Activated naive CD4-positive, alpha-beta T cell treated with anti-CD3 and anti-CD28 coated beads for 36 hours (primary cell): ENCODE measurements at regions of chr16 and their contacts with region 1.

Region 1: GRCh38 chr16:57045694-57046381 is 46.5 kb upstream of the CPNE2 start:
- DNase-seq: peak; percentile 51
- H3K4me3 Mint-ChIP-seq: no peak overlapping the region
- H3K27ac Mint-ChIP-seq: peak overlapping the region; percentile 73
- H3K4me1 Mint-ChIP-seq: peaks cover 65% of the 10 kb centered on the region
- H3K27me3 Mint-ChIP-seq: no peaks in the 10 kb centered on the region

Region 2: DNA sequence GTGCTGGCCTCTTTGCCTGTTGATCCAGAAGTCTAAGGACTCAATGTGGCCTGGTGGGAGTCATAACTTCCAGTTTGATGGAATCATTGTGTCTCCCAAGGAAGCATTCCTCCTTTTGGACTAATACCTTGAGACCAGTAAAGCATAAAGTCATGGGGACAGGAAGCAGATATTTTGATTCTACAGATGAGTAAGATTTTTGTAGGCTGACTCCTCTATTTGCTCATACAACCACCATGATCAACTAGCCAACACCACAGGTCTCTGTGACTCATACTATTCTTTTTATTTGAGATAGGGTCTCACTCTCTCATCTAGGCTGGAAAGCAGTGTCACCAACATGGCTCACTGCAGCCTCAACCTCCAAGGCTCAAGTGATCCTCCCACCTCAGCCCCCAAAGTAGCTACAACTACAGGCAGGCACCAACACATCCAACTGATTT is 431.3 kb before region 1 on chr16:
- CTCF ChIA-PET with region 1: no interaction called
- intact Hi-C with region 1: loop called (anchors 1 kb)
- DNase-seq: peak; percentile 58
- H3K4me3 Mint-ChIP-seq: no peak overlapping the region
- H3K27ac Mint-ChIP-seq: no peak overlapping the region
- H3K4me1 Mint-ChIP-seq: peaks cover 59% of the 10 kb centered on the region
- H3K27me3 Mint-ChIP-seq: peaks cover 20% of the 10 kb centered on the region

Region 3: DNA sequence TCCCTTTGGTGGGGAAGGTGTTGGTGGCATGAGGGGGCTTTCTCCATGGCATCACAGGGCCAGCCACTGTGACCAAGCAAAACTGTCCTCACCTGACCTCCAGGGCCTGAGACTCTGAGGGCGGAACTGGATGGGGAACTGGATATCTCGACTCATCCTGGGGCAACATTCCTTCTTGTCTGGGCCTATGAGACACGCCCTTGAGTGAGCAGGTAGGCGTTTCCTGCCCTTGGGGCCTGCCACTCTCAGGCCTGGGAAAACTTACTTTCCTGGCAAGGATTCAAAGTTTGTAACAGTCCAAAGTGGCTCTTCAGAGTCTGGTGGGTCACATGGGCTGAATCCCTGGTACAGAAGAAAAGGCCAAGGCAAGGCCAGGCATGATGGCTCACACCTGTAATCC is 354.0 kb before region 1 on chr16:
- CTCF ChIA-PET with region 1: no interaction called
- intact Hi-C with region 1: no loop called
- DNase-seq: no peak
- H3K4me3 Mint-ChIP-seq: no peak overlapping the region
- H3K27ac Mint-ChIP-seq: no peak overlapping the region
- H3K4me1 Mint-ChIP-seq: no peaks in the 10 kb centered on the region
- H3K27me3 Mint-ChIP-seq: no peaks in the 10 kb centered on the region

Region 4: DNA sequence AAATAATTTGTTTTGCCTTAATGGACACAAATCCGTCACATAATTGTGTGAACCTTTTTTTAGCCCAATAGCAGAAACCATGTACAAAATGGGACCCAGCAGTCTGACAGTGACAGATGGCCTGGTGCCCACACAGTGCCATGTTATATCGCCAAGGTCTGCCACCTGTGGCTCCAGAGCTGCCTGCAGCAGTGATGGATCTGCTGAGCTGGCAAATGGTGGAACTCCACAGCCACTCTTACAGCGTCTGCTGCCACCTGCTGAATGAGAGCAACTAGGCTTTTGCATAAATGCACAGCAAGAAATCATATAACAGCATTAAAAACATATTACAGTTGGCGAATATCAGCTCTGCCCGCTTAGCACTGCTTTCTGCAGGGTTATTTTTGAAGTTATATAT is 256.5 kb before region 1 on chr16:
- CTCF ChIA-PET with region 1: no interaction called
- intact Hi-C with region 1: no loop called
- DNase-seq: peak; percentile 60
- H3K4me3 Mint-ChIP-seq: no peak overlapping the region
- H3K27ac Mint-ChIP-seq: no peak overlapping the region
- H3K4me1 Mint-ChIP-seq: no peaks in the 10 kb centered on the region
- H3K27me3 Mint-ChIP-seq: no peaks in the 10 kb centered on the region

Region 5: GRCh38 chr16:56866943-56867830 is 178.7 kb before region 1 on chr16:
- CTCF ChIA-PET with region 1: interaction called, 3 read pairs
- intact Hi-C with region 1: loop called (anchors 10 kb)
- DNase-seq: peak; percentile 64
- H3K4me3 Mint-ChIP-seq: no peak overlapping the region
- H3K27ac Mint-ChIP-seq: no peak overlapping the region
- H3K4me1 Mint-ChIP-seq: peaks cover 15% of the 10 kb centered on the region
- H3K27me3 Mint-ChIP-seq: no peaks in the 10 kb centered on the region

Region 6: DNA sequence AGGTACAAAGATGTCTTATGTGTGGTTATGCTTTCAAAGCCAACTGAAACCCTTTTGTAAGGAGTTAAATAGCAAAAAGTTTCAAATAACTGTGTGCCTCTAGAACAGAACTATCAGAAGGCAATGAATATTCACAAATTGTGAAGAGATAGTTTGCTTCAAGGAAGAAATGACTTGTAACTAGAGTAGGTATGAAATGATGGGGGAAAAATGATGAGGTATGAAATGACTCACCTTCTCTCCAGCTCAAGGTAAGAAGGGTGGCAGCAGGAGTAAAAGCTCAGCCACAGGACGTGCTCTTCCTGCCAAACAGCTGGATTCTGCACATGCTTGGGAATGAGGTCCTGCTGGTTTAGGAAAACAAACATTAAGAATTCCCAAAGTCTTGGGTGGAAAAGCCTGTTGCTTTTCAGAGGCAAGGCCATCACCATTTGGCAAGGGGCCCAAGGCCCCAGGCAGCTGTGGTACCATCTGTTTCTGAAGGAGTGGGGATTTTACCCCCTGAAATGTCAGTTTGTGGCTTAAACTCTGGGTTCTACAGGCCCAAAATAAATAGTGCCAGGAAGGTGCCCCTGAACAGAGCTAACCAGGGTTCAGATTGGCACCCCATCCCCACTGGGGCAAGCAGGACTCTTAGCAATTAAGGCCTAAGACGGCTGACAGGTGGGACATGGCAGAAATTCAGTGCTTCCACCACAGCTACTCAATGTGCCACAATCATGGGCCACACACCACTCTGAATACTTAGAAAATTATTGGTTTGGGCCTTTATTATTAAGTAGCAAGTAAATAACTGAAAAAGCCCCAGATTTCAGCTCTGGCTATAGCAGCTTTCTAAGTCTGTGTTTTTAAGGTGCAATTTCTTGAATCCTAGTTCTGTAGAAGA is 100.6 kb before region 1 on chr16:
- CTCF ChIA-PET with region 1: interaction called, 3 read pairs
- intact Hi-C with region 1: loop called (anchors 1 kb)
- DNase-seq: peak; percentile 65
- H3K4me3 Mint-ChIP-seq: peak overlapping the region; percentile 3
- H3K27ac Mint-ChIP-seq: peak overlapping the region; percentile 96
- H3K4me1 Mint-ChIP-seq: peaks cover 56% of the 10 kb centered on the region
- H3K27me3 Mint-ChIP-seq: no peaks in the 10 kb centered on the region

Region 7: DNA sequence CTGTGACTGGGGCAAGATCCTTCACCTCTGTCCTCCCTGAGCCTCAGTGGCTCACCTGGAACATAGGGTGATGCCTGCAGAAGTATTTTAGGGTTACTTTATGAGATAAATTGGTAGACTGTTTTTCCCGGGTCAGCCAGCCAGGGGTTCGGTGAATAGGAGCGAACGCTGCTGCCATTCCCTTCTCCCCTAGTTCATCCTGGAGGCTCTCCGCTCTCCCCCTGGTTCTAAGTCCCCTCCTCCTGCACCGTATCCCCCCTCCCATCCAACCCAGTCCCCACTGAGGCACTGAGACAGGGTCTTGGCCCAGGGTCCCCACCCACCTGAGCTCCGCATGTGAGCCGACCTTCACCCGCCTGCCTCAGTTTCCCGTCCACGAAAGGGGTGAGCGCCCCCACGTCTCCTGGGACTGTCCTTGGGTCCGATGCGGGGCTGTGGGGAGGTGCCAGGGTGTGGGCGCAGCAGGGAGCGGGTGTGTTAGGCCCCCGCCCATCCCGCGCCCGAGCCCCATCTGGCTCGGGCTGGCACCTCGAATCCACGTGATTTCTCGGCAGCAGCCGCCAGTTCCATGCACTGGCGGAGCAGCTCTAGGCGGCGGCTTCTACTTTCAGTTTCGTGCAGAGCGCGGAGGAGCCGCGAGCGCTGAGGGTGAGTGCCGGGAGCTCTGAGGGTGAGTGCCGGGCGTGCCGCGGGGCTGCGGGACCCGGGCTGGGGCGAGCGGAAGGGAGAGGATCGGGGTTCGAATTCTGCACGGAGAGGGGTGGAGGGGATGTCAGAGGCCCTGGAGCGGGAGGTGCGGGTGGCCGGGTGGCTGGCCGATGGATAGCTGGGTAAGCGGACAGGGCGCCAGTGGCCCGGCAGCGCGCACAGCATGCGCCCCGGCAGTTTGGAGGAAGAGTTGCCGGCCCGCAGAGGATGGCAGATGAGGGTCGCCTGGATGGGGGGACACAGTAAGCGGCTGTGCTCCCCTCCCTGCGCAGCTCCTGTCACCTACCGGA is 56.6 kb before region 1 on chr16 and contains the start of gene NLRC5:
- CTCF ChIA-PET with region 1: interaction called, 9 read pairs
- intact Hi-C with region 1: loop called (anchors 1 kb)
- DNase-seq: peak; percentile 95
- H3K4me3 Mint-ChIP-seq: peak within 1 kb of the TSS; percentile 99
- H3K27ac Mint-ChIP-seq: peak within 1 kb of the TSS; percentile 100
- H3K4me1 Mint-ChIP-seq: peaks cover 73% of the 10 kb centered on the region
- H3K27me3 Mint-ChIP-seq: no peaks in the 10 kb centered on the region
- total RNA-seq, gene NLRC5: 104 to 119 TPM

Region 8: DNA sequence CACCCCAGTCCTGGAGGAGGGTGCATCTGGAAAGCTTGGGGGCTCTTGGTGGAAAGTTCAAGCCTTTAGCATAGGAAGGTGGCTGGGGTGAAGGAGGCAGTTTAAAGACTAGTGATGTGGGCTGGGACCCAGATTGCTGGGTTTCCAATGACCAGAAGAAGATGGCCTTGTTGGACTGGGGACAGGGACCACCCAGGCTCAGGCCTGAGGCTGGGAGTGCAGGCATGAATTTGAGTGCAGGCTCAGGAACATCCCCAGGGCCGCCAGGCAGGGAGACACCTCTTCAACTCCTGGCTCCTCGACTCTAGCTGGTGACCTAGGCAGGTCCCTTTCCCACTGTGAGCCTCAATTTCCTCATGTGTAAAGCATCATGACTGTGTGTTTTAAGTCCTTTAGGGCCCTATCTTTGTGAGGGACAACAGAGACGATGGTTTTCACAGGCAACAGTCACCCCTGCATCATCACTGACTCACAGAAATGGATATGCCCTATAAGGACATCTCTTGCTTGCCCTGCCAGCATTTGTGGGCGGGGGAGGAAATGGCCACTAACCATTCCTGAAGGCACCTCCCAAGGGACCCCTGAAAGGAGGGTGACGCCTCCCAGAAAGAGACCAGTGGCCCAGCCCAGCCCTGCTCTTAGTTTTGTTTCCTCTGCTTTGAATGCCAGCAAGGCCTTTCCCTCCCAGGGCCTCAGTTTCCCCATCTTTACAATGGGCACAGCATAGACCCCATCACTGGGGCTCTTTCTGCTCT is 45.4 kb before region 1 on chr16:
- CTCF ChIA-PET with region 1: interaction called, 3 read pairs
- intact Hi-C with region 1: loop called (anchors 1 kb)
- DNase-seq: peak; percentile 85
- H3K4me3 Mint-ChIP-seq: peak overlapping the region; percentile 50
- H3K27ac Mint-ChIP-seq: peak overlapping the region; percentile 97
- H3K4me1 Mint-ChIP-seq: peaks cover 92% of the 10 kb centered on the region
- H3K27me3 Mint-ChIP-seq: no peaks in the 10 kb centered on the region

Region 9: DNA sequence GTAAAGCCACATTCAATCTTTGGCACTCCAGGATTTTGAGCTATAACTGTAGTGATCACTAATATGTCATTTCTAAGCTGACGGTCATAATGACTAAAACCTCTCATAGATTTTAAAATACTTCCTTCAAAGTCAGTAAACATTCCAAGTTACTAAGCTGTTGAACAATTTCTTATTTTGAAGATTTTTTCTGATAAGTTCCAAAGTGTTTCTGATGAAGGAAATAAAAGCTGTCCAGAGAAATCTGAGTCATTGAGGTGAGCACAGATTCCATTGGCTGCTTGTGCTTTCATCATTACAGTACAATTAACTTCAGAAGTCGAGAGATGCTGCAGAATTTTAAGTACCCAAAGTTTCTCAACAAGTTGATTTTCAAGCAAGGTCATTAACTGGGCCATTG is 32.6 kb before region 1 on chr16:
- CTCF ChIA-PET with region 1: interaction called, 5 read pairs
- intact Hi-C with region 1: loop called (anchors 1 kb)
- DNase-seq: no peak
- H3K4me3 Mint-ChIP-seq: no peak overlapping the region
- H3K27ac Mint-ChIP-seq: peak overlapping the region; percentile 97
- H3K4me1 Mint-ChIP-seq: peaks cover 85% of the 10 kb centered on the region
- H3K27me3 Mint-ChIP-seq: no peaks in the 10 kb centered on the region

Region 10: GRCh38 chr16:57061084-57061905 is 15.5 kb after region 1 on chr16:
- CTCF ChIA-PET with region 1: no interaction called
- intact Hi-C with region 1: no loop called
- DNase-seq: no peak
- H3K4me3 Mint-ChIP-seq: no peak overlapping the region
- H3K27ac Mint-ChIP-seq: peak overlapping the region; percentile 72
- H3K4me1 Mint-ChIP-seq: peaks cover 3% of the 10 kb centered on the region
- H3K27me3 Mint-ChIP-seq: no peaks in the 10 kb centered on the region

Region 11: DNA sequence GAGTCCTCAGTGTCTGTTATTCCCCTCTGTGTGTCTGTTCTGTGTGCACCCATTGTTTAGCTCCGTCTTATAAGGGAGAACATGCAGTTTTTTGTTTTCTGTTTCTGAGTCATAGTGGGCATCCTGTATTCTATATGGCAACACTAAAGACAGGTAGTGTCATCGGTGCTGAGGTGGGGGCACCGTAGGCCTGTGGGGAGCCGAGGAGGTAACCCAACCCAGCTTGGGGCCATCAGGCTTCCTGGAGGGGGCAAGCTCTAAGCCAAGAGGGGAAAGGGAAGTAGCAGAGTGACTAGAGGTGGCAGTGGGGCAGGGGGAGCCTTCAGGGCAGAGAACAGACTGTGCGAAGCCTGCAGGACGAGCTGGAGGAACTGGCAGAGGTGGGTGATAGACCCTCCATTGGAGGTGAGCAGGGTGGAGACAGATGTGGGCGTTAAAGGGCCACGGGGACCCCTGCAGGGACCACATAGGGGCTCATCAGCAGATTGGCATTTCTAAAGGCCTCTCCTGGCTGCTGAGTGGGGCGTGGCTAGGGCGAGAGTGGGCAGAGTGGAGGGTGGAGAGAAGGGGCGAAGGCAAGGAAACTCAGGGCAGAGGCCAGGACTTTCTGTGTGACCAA is 83.0 kb after region 1 on chr16:
- CTCF ChIA-PET with region 1: no interaction called
- intact Hi-C with region 1: no loop called
- DNase-seq: peak; percentile 85
- H3K4me3 Mint-ChIP-seq: peak overlapping the region; percentile 43
- H3K27ac Mint-ChIP-seq: peak overlapping the region; percentile 87
- H3K4me1 Mint-ChIP-seq: peaks cover 84% of the 10 kb centered on the region
- H3K27me3 Mint-ChIP-seq: no peaks in the 10 kb centered on the region